Keratinocyte (primary cell): ENCODE measurements at regions of chr20 and their contacts with region 1.

Region 1: GRCh38 chr20:16761305-16761829 is 13.2 kb downstream of the OTOR start:
- DNase-seq: peak; percentile 28
- H3K4me3 ChIP-seq: no peak overlapping the region
- H3K27ac ChIP-seq: no peak overlapping the region
- H3K4me1 ChIP-seq: no peaks in the 10 kb centered on the region
- H3K27me3 ChIP-seq: no peaks in the 10 kb centered on the region
- CTCF ChIP-seq: peak; percentile 64 to 77 (median 76)

Region 2: GRCh38 chr20:16517946-16518783 is 243.2 kb before region 1 on chr20:
- dilution Hi-C with region 1: loop called (anchors 25 kb)
- DNase-seq: no peak
- H3K4me3 ChIP-seq: no peak overlapping the region
- H3K27ac ChIP-seq: no peak overlapping the region
- H3K4me1 ChIP-seq: no peaks in the 10 kb centered on the region
- H3K27me3 ChIP-seq: no peaks in the 10 kb centered on the region
- CTCF ChIP-seq: peak; percentile 47 to 75 (median 72)

Region 3: GRCh38 chr20:16692442-16692841 is 68.9 kb before region 1 on chr20:
- dilution Hi-C with region 1: no loop called
- DNase-seq: no peak
- H3K4me3 ChIP-seq: no peak overlapping the region
- H3K27ac ChIP-seq: no peak overlapping the region
- H3K4me1 ChIP-seq: no peaks in the 10 kb centered on the region
- H3K27me3 ChIP-seq: no peaks in the 10 kb centered on the region
- CTCF ChIP-seq: no peak